Colonic mucosa (tissue), 4 donors: ENCODE measurements at regions of chr11 and their contacts with region 1.

Region 1: GRCh38 chr11:2532704-2533586 is 88.1 kb downstream of the KCNQ1 start:
- DNase-seq: peak; percentile 92
- H3K4me3 ChIP-seq: no peak overlapping the region
- H3K27ac ChIP-seq: no peak overlapping the region
- H3K4me1 ChIP-seq: no peaks in the 10 kb centered on the region
- H3K27me3 ChIP-seq: no peaks in the 10 kb centered on the region
- CTCF ChIP-seq: peak; percentile 98

Region 2: DNA sequence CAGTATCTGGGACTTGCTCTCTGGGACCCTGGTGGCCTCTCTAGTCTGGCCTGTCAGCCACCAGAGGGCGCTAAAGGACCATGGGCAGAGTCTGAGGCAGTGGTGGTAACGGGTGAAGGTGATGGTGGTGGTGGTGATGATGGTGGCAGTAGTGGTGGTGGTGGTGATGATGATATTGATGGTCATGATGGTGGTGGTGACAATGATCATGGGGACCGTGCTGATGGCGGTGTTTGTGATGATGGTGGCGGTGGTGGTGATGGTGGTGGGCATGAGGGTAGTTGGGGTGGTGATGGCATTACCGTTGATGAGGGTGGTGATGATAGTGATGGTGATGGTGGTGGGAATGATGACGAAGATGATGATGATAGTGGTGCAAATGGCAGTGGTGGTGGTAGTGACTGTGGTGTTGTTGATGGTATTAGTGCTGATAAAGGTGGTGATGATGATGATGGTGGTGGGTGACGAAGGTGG is 104.6 kb before region 1 on chr11:
- intact Hi-C with region 1: loop called (anchors 1 kb)
- DNase-seq: peak; percentile 88
- H3K4me3 ChIP-seq: no peak overlapping the region
- H3K27ac ChIP-seq: no peak overlapping the region
- H3K4me1 ChIP-seq: no peaks in the 10 kb centered on the region
- H3K27me3 ChIP-seq: no peaks in the 10 kb centered on the region
- CTCF ChIP-seq: peak; percentile 84

Region 3: DNA sequence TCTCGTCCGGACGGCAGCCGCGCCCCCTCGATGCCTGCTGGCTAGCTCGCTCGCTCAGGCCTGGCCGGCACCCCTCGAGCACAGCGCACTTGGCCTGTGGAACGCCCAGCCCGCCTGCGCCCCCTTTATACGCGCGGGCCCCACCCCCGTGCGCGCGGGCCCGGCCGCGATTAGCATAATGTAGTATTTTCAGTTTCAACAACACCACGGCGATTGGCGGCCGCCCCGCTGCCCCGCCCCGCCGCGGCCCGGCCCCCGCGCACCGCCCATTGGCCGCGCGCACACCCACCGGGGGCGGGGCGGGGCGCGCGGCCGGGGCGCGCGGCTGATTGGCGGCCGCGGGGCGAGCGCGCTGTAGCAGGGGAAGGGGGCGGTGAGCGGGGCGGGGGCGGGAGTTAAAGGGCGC is 352.7 kb after region 1 on chr11 and contains the start of gene CDKN1C:
- intact Hi-C with region 1: loop called (anchors 1 kb)
- DNase-seq: peak; percentile 90
- H3K4me3 ChIP-seq: peak within 1 kb of the TSS; percentile 81
- H3K27ac ChIP-seq: peak within 1 kb of the TSS; percentile 55
- H3K4me1 ChIP-seq: peaks cover 4% of the 10 kb centered on the region
- H3K27me3 ChIP-seq: peaks cover 8% of the 10 kb centered on the region
- CTCF ChIP-seq: no peak
- total RNA-seq, gene CDKN1C: 10.9 to 18.2 TPM